Heart right ventricle (tissue), 16 donors: ENCODE measurements at regions of chr11 and their contacts with region 1.

Region 1: DNA sequence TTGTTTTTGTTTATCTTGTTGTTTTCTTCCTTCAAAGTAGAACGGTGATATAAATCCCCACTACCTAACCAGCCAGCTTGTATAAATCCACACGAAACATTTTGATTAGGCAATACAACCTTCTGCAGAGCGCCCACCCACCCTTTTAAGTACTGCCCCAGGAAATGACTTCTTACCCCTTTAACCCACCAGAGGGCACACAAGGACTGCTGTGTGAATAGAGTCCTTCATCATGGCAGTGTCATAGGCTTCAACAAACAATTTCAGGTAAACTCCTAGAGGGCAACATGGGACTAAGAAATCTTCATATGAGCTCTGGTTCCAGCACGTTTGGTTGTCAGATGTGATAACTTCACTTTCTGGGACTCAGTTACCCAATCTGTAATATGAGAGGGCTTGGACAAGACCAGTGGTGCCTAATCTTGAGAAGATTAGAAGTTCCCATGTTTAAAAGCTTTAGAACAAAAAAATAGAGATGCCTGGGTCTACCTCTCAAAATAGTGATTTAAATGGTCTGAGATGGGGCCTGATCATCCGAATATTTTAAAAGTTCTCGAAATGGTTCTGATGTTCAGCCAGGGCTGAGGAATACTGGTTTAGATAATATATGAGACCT is 56.1 kb downstream of the PIWIL4 start:
- DNase-seq: peak in 1 of 2 donors; percentile 77
- ATAC-seq: peak; percentile 84 to 96 (median 94)
- H3K4me3 ChIP-seq: no peak overlapping the region
- H3K27ac ChIP-seq: no peak overlapping the region
- H3K4me1 ChIP-seq: peaks cover 0 to 6% (median 0%) of the 10 kb centered on the region in 9 donors
- H3K27me3 ChIP-seq: no peaks in the 10 kb centered on the region
- CTCF ChIP-seq: peak; percentile 74 to 95 (median 87)

Region 2: GRCh38 chr11:94731880-94732601 is 108.8 kb after region 1 on chr11:
- intact Hi-C with region 1: loop called in 5 of 10 experiments (anchors 10 kb)
- DNase-seq: peak in 1 of 2 donors; percentile 31
- ATAC-seq: peak; percentile 66 to 89 (median 84)
- H3K4me3 ChIP-seq: no peak overlapping the region
- H3K27ac ChIP-seq: peak overlapping the region; percentile 55 to 85 (median 74)
- H3K4me1 ChIP-seq: peaks cover 8 to 47% (median 41%) of the 10 kb centered on the region in 9 donors
- H3K27me3 ChIP-seq: no peaks in the 10 kb centered on the region
- CTCF ChIP-seq: no peak

Region 3: GRCh38 chr11:94767761-94768601 is 144.8 kb after region 1 on chr11 and contains the start of gene AMOTL1:
- intact Hi-C with region 1: loop called in 9 of 10 experiments (anchors 2 to 10 kb)
- DNase-seq: peak; percentile 89 to 90
- ATAC-seq: peak; percentile 91 to 97 (median 94)
- H3K4me3 ChIP-seq: peak within 1 kb of the TSS; percentile 67 to 99 (median 88)
- H3K27ac ChIP-seq: peak within 1 kb of the TSS; percentile 87 to 98 (median 94)
- H3K4me1 ChIP-seq: peaks cover 8 to 39% (median 24%) of the 10 kb centered on the region in 9 donors
- H3K27me3 ChIP-seq: peaks cover 0 to 21% (median 0%) of the 10 kb centered on the region in 7 donors
- CTCF ChIP-seq: peak in 4 of 9 donors; percentile 10 to 41 (median 37)
- total RNA-seq, gene AMOTL1: 30.5 to 115 (median 77.1) TPM

Region 4: DNA sequence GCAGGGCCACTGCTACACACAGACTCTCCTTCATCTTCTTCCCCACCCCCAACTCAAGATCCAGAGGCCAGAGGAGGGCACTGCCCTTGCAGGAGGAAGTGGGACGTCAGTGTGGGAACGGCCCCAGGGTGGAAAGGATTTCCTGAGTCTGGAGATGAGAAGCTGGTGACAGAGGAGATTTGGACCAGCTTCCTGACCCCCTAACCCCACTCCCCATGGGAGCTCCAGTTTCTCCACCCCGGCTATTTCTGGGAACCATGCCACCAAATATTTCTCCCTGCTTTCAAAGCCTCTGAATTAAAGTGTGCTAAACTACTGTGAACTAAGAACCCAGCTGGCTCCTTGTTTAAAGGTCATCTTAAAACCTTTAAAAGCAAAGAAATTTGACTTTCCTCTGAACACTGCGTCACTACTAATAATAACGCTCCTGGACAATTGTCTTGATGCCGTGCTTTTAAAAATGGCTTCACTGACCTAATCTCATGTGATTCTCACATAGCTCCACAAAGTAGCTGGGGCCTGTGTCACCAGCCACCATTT is 303.5 kb after region 1 on chr11:
- intact Hi-C with region 1: no loop called
- DNase-seq: peak; percentile 84 to 93
- ATAC-seq: peak; percentile 90 to 97 (median 93)
- H3K4me3 ChIP-seq: no peak overlapping the region
- H3K27ac ChIP-seq: peak overlapping the region; percentile 6 to 90 (median 79)
- H3K4me1 ChIP-seq: peaks cover 10 to 56% (median 40%) of the 10 kb centered on the region in 9 donors
- H3K27me3 ChIP-seq: no peaks in the 10 kb centered on the region
- CTCF ChIP-seq: no peak

Region 5: DNA sequence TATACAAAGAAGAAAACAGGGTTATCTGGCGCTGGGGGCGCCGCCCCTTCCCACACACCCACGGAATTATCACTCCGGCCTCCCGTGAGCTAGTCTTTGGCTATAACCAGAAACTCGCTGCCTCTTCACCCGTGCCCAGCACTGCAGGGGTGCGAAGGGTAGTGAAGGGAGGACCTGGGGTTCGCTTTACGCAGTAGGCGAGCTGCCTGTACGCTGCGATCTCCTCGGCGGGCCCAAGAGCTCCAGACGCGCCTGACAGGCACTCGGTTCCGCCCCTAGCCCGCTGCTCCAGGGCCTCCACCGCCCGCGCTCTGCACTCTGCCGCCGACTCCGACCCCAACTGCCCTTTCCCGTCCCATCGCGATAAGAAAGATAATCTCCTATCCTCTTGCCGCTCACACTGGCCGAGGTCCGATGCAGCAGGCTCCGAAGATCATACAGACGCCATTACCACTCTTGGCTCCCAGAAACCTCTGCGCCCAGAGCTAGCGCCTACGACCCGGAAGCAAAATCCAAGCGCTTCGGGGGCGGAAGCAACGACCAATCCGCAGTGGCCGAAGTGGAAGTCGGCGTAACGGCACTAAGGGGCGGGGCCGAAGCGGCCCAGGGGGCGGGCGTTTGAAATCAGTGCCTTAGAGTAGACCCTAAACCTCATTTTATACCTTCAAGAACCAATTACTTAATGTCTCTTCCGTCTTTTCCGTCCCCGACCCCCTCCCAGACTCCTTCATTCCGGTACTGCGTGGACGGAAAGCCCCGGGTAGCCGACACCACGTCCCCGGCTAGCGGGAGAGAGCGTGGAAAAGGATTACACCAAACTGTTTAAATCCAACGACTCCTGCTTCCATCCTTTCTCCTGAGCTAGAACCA is 350.1 kb after region 1 on chr11 and contains the starts of genes CWC15 and KDM4D:
- intact Hi-C with region 1: loop called in 9 of 10 experiments (anchors 5 to 10 kb)
- DNase-seq: peak; percentile 94 to 96
- ATAC-seq: peak; percentile 100
- H3K4me3 ChIP-seq: peak within 1 kb of the TSS; percentile 67 to 97 (median 84)
- H3K27ac ChIP-seq: peak within 1 kb of the TSS in 9 of 10 donors; percentile 56 to 88 (median 81)
- H3K4me1 ChIP-seq: peaks cover 2 to 26% (median 15%) of the 10 kb centered on the region in 9 donors
- H3K27me3 ChIP-seq: no peaks in the 10 kb centered on the region
- CTCF ChIP-seq: no peak
- total RNA-seq, gene CWC15: 53.1 to 75.4 (median 67.3) TPM
- total RNA-seq, gene KDM4D: 0.79 to 1.3 (median 1.0) TPM

Region 6: GRCh38 chr11:95138448-95138847 is 515.2 kb after region 1 on chr11:
- intact Hi-C with region 1: loop called in 3 of 10 experiments (anchors 10 kb)
- DNase-seq: no peak
- ATAC-seq: peak in 3 of 8 donors; percentile 17 to 61 (median 53)
- H3K4me3 ChIP-seq: no peak overlapping the region
- H3K27ac ChIP-seq: no peak overlapping the region
- H3K4me1 ChIP-seq: peaks cover 0 to 7% (median 4%) of the 10 kb centered on the region in 9 donors
- H3K27me3 ChIP-seq: no peaks in the 10 kb centered on the region
- CTCF ChIP-seq: peak in 6 of 9 donors; percentile 28 to 49 (median 38)